Caco-2 (cell line): ENCODE measurements at regions of chr6 and their contacts with region 1.

Region 1: GRCh38 chr6:36027501-36028087 is at the start of gene MAPK14:
- DNase-seq: peak; percentile 99
- H3K4me3 ChIP-seq: peak within 1 kb of the TSS; percentile 78
- H3K4me3 Mint-ChIP-seq: peak within 1 kb of the TSS; percentile 83
- H3K27ac Mint-ChIP-seq: peak within 1 kb of the TSS; percentile 80
- H3K4me1 ChIP-seq: peaks cover 34% of the 10 kb centered on the region
- H3K4me1 Mint-ChIP-seq: peaks cover 18% of the 10 kb centered on the region
- H3K27me3 ChIP-seq: no peaks in the 10 kb centered on the region
- H3K27me3 Mint-ChIP-seq: no peaks in the 10 kb centered on the region
- CTCF ChIP-seq: peak; percentile 82 to 86
- total RNA-seq, gene MAPK14: 69.3 and 72.0 TPM in 2 replicates

Region 2: DNA sequence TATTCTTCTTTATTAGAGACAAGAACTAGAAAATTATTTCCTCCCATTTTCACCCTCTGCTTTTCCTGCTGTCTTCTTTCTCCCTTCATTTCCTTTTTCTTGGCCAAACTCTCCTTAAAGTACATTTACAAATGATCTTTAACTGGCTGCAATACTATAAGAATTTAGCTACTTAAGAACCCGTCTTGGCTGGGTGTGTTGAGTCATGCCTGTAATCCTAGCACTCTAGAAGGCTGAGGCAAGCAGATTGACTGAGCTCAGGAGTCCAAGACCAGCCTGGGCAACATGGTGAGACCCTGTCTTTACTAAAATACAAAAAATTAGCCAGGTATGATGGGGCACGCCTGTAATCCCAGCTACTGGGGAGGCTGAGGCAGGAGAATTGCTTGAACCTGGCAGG is 67.4 kb before region 1 on chr6:
- CTCF ChIA-PET with region 1: interaction called, 3 read pairs
- POLR2A ChIA-PET with region 1: interaction called, 9 read pairs
- intact Hi-C with region 1: loop called (anchors 2 kb)
- DNase-seq: no peak
- H3K4me3 ChIP-seq: no peak overlapping the region
- H3K4me3 Mint-ChIP-seq: no peak overlapping the region
- H3K27ac Mint-ChIP-seq: no peak overlapping the region
- H3K4me1 ChIP-seq: peaks cover 49% of the 10 kb centered on the region
- H3K4me1 Mint-ChIP-seq: peaks cover 33% of the 10 kb centered on the region
- H3K27me3 ChIP-seq: no peaks in the 10 kb centered on the region
- H3K27me3 Mint-ChIP-seq: no peaks in the 10 kb centered on the region
- CTCF ChIP-seq: no peak

Region 3: DNA sequence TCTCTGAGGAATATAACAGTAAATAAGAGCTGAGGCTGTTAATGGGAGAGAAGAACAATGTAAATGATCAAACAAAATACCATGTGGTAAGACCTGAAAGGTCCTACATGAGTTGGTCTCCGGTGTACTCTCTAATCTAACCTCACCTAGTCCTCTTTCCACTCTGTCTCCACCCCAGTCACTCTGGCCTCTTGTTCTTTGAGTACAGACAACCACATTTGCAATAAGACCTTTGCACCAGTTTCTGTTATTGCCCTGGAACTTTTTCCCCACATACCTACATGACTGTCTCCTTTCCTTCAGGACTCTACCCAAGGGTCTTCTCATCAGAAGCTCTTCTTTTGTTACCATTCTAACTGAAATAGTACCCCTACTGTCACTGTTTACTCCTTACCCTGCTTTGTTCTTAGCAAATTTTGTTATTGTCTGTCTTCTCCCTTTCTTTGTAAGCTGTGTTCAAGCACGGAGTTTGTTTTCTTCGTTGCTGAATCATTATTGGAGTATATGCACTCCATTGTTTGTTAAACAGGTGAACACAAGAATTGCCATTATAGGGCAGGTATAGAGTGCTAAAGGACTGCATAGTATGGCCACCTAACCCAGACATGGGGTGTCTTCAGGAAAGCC is 37.3 kb after region 1 on chr6:
- CTCF ChIA-PET with region 1: interaction called, 4 read pairs
- POLR2A ChIA-PET with region 1: interaction called, 4 read pairs
- intact Hi-C with region 1: loop called (anchors 2 kb)
- DNase-seq: peak; percentile 31 to 58
- H3K4me3 ChIP-seq: no peak overlapping the region
- H3K4me3 Mint-ChIP-seq: peak overlapping the region; percentile 12
- H3K27ac Mint-ChIP-seq: peak overlapping the region; percentile 45
- H3K4me1 ChIP-seq: peaks cover 57% of the 10 kb centered on the region
- H3K4me1 Mint-ChIP-seq: peaks cover 36% of the 10 kb centered on the region
- H3K27me3 ChIP-seq: no peaks in the 10 kb centered on the region
- H3K27me3 Mint-ChIP-seq: no peaks in the 10 kb centered on the region
- CTCF ChIP-seq: no peak

Region 4: GRCh38 chr6:36104836-36105235 is 77.2 kb after region 1 on chr6:
- CTCF ChIA-PET with region 1: no interaction called
- POLR2A ChIA-PET with region 1: interaction called, 20 read pairs
- intact Hi-C with region 1: no loop called
- DNase-seq: no peak
- H3K4me3 ChIP-seq: no peak overlapping the region
- H3K4me3 Mint-ChIP-seq: no peak overlapping the region
- H3K27ac Mint-ChIP-seq: no peak overlapping the region
- H3K4me1 ChIP-seq: peaks cover 4% of the 10 kb centered on the region; the same call in 1 of the 2 replicates
- H3K4me1 Mint-ChIP-seq: no peaks in the 10 kb centered on the region
- H3K27me3 ChIP-seq: no peaks in the 10 kb centered on the region
- H3K27me3 Mint-ChIP-seq: no peaks in the 10 kb centered on the region
- CTCF ChIP-seq: no peak